Activated CD4-positive, alpha-beta memory T cell treated with anti-CD3 and anti-CD28 coated beads for 36 hours (primary cell): ENCODE measurements at regions of chr11 and their contacts with region 1.

Region 1: GRCh38 chr11:36390963-36391471 is 94.9 kb downstream of the PRR5L start:
- DNase-seq: peak; percentile 68
- H3K4me3 Mint-ChIP-seq: peak overlapping the region; percentile 36
- H3K27ac Mint-ChIP-seq: peak overlapping the region; percentile 96
- H3K4me1 Mint-ChIP-seq: peaks cover 82% of the 10 kb centered on the region
- H3K27me3 Mint-ChIP-seq: no peaks in the 10 kb centered on the region

Region 2: DNA sequence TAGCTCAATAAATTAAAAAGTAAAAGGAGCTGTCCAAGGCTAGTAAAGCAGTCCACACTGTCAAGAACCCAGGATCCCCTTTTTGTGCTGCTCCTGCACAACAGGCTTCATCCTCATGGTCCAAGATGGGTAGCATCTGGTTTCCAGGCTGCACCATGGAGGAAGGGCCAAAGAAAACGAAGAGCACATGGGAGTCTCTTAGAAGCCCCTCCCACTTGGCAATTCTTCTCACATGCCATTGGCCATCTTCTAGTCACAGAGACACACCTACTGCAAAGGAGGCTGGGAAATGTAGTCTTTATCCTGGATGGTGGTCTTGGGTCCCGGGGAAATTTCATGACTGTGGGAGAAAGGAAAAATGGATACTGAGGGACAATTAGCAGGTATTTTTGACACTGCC is 57.1 kb before region 1 on chr11:
- CTCF ChIA-PET with region 1: no interaction called
- POLR2A ChIA-PET with region 1: no interaction called
- intact Hi-C with region 1: no loop called
- DNase-seq: no peak
- H3K4me3 Mint-ChIP-seq: no peak overlapping the region
- H3K27ac Mint-ChIP-seq: no peak overlapping the region
- H3K4me1 Mint-ChIP-seq: peaks cover 13% of the 10 kb centered on the region
- H3K27me3 Mint-ChIP-seq: no peaks in the 10 kb centered on the region

Region 3: DNA sequence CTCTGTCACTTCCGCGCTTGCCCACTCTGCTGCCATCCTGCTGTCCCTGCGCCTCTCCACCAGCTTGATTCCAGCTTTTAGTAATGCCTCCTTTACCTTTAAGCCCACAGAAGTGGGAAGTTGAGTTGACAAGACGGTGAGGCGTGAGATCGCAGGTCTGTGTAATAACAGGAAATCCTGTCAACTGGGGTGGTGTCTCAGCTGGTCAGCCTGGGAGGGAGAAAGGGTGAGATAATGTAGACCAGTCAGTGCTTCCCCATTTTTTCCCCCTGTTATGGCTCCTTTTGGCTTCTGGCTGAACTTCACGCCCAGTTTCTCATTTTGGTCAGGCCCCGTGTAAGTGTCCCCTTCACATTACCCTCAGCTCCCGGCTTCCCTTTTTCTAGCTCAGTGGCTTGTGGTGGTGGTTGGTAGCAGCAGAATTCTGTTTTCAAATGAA is 20.2 kb after region 1 on chr11:
- CTCF ChIA-PET with region 1: interaction called, 4 read pairs
- POLR2A ChIA-PET with region 1: interaction called, 4 read pairs
- intact Hi-C with region 1: loop called (anchors 1 kb)
- DNase-seq: peak; percentile 40
- H3K4me3 Mint-ChIP-seq: peak overlapping the region; percentile 10
- H3K27ac Mint-ChIP-seq: peak overlapping the region; percentile 95
- H3K4me1 Mint-ChIP-seq: peaks cover 67% of the 10 kb centered on the region
- H3K27me3 Mint-ChIP-seq: no peaks in the 10 kb centered on the region

Region 4: DNA sequence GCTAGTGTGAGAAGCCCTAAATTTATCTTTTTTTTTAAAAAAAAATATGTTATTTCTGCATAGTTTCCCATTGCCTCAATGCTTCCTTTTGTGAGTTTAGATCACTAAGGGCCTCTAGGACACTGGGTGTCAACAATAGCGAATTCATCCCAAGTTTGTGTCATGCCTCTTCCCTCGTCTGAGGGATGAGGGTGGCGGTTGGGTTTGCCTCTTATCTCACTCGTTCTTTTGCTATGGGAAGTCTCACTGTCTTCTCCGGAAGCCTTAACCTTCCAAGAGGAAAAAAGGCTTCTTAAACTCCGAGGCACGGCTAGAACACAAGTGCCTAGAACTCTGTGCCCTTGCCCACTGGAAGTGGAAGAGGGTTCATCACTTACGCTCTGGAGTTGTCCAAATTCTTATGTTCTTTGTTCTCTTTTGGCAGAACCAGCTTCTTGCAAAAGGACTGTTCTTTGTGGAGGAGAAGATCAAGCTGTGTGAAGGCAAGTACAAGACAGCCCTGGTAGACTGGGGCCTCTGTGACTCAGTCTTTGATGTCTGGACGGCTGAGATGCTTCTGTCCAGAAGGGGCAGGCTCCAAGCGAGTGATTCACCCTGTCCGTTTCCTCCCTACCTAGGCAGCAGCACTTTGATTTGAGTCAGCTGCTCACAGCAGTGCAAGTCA is 40.5 kb after region 1 on chr11:
- CTCF ChIA-PET with region 1: no interaction called
- POLR2A ChIA-PET with region 1: no interaction called
- intact Hi-C with region 1: loop called (anchors 2 kb)
- DNase-seq: peak; percentile 81
- H3K4me3 Mint-ChIP-seq: peak overlapping the region; percentile 31
- H3K27ac Mint-ChIP-seq: peak overlapping the region; percentile 80
- H3K4me1 Mint-ChIP-seq: peaks cover 31% of the 10 kb centered on the region
- H3K27me3 Mint-ChIP-seq: no peaks in the 10 kb centered on the region

Region 5: GRCh38 chr11:36450110-36450572 is 59.1 kb after region 1 on chr11:
- CTCF ChIA-PET with region 1: no interaction called
- POLR2A ChIA-PET with region 1: no interaction called
- intact Hi-C with region 1: loop called (anchors 5 kb)
- DNase-seq: no peak
- H3K4me3 Mint-ChIP-seq: no peak overlapping the region
- H3K27ac Mint-ChIP-seq: no peak overlapping the region
- H3K4me1 Mint-ChIP-seq: peaks cover 46% of the 10 kb centered on the region
- H3K27me3 Mint-ChIP-seq: no peaks in the 10 kb centered on the region